K562 (cell line): ENCODE measurements at regions of chr12 and their contacts with region 1.

Region 1: DNA sequence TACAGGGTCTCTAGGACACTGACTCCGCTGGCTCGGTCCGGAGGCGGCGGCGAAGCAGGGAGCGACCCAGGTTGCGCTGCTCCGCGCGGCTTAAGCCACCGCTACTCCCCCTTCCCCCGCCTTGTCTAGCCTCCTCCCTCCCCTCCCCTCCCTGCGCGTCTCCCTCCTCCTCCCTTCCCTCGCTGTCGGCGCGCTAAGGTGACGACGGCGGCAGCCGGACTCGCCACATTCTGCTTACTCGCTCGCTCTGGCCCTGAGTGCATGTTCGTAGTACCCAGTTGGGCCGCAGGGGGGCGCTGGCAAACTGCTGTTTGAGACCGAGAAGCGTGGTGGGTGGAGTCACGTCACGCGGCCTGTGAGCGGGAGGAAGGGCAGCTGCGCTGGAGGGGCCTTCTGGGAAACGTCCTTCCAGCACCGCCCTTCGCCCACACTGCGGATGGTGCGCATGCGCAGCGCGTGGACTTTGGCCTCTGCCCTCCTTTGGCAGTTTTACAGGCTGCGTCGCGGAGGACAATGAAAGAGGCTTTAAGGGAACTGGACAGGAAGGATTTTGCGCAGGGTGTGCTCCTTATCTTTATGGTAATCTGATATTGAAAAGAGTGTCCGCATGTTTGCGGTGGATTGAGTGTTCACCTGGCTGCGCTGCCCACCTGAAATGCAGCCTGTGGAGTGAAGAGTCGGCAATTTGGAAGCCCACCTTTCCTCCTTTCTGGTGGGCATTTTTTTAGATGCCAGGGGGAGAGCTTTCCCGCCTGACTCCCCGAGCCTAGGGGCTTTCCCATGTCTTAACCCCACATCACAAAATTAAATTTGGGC is at the start of gene SCAF11:
- DNase-seq: peak; percentile 96 to 100 (median 96)
- ATAC-seq: peak; percentile 80
- H3K4me3 ChIP-seq: peak within 1 kb of the TSS; percentile 87
- H3K27ac ChIP-seq: peak within 1 kb of the TSS; percentile 97
- H3K4me1 ChIP-seq: peaks cover 8 to 16% of the 10 kb centered on the region in 2 experiments
- H3K27me3 ChIP-seq: no peaks in the 10 kb centered on the region
- CTCF ChIP-seq: peak; percentile 91 to 98 (median 97)
- EP300 ChIP-seq: peak; percentile 62
- POLR2A ChIP-seq: peak; percentile 89
- RAD21 ChIP-seq: peak; percentile 87 to 94
- polyA plus RNA-seq, gene SCAF11: 30.4 to 35.7 TPM

Region 2: GRCh38 chr12:45762185-45763110 is 228.2 kb before region 1 on chr12:
- CTCF ChIA-PET with region 1: no interaction called
- POLR2A ChIA-PET with region 1: no interaction called
- in situ Hi-C with region 1: no loop called
- intact Hi-C with region 1: loop called (anchors 5 kb)
- DNase-seq: peak in 3 of 4 experiments; percentile 9 to 55 (median 27)
- ATAC-seq: peak; percentile 88
- H3K4me3 ChIP-seq: no peak overlapping the region
- H3K27ac ChIP-seq: no peak overlapping the region
- H3K4me1 ChIP-seq: peaks cover 0 to 2% of the 10 kb centered on the region in 2 experiments; a peak in 2 of 5 replicates
- H3K27me3 ChIP-seq: no peaks in the 10 kb centered on the region
- CTCF ChIP-seq: peak; percentile 41 to 67 (median 52); a peak in 5 of 6 replicates
- EP300 ChIP-seq: no peak
- POLR2A ChIP-seq: no peak
- RAD21 ChIP-seq: peak; percentile 37 to 62

Region 3: DNA sequence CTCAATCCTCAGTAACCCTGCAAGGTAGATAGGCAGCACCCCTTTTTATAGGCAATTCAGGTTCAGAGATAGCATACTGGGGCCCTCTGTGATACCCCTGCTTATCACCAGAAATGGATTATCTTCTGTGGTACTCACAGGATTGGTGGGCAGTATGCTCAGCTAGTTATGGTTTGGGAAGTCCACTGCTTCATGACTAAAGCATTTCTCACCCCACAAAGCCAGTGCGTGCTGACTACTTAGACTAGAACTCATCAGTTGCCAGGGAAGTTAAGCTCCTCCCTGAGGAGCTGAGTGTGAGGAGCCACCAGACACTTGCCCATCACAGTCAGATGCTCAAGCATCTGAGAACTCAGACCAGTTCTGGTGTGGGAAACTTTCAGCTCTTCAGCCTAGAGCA is 76.6 kb before region 1 on chr12:
- CTCF ChIA-PET with region 1: no interaction called
- POLR2A ChIA-PET with region 1: no interaction called
- in situ Hi-C with region 1: no loop called
- intact Hi-C with region 1: no loop called
- DNase-seq: peak in 2 of 4 experiments; percentile 9 to 16
- ATAC-seq: peak; percentile 48; the same call in 2 of the 3 replicates
- H3K4me3 ChIP-seq: no peak overlapping the region
- H3K27ac ChIP-seq: no peak overlapping the region
- H3K4me1 ChIP-seq: no peaks in the 10 kb centered on the region
- H3K27me3 ChIP-seq: no peaks in the 10 kb centered on the region
- CTCF ChIP-seq: no peak
- EP300 ChIP-seq: no peak
- POLR2A ChIP-seq: no peak
- RAD21 ChIP-seq: no peak

Region 4: DNA sequence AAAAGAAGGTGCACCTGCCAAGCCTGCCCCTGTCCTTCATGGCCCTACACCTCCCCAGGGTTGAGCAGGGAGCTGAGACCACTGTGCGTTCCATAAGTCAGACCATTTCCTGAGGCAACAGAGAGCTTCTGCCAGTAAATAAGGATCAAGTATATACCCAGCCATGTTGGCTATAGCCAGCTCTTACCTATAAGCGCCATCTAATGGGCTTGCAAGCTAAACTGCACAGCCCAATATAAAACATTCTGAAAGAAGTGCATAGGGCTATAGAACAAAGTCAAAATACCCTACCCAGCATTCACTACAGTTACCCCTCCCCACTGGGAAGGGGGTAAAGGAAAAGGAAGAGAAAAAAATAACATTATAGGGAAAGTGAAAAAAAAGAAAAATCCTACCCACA is 59.0 kb after region 1 on chr12:
- CTCF ChIA-PET with region 1: no interaction called
- POLR2A ChIA-PET with region 1: no interaction called
- in situ Hi-C with region 1: no loop called
- intact Hi-C with region 1: loop called (anchors 2 kb)
- DNase-seq: no peak
- ATAC-seq: peak; percentile 55
- H3K4me3 ChIP-seq: no peak overlapping the region
- H3K27ac ChIP-seq: no peak overlapping the region
- H3K4me1 ChIP-seq: no peaks in the 10 kb centered on the region
- H3K27me3 ChIP-seq: no peaks in the 10 kb centered on the region
- CTCF ChIP-seq: peak in 1 of 3 experiments; percentile 16; a peak in 1 of 6 replicates
- EP300 ChIP-seq: no peak
- POLR2A ChIP-seq: no peak
- RAD21 ChIP-seq: peak in 1 of 2 experiments; percentile 43; a peak in 2 of 4 replicates

Region 5: GRCh38 chr12:46153268-46153872 is 162.7 kb after region 1 on chr12:
- CTCF ChIA-PET with region 1: no interaction called
- POLR2A ChIA-PET with region 1: no interaction called
- in situ Hi-C with region 1: no loop called
- intact Hi-C with region 1: loop called (anchors 2 kb)
- DNase-seq: peak in 2 of 4 experiments; percentile 16 to 17
- ATAC-seq: no peak
- H3K4me3 ChIP-seq: no peak overlapping the region
- H3K27ac ChIP-seq: no peak overlapping the region
- H3K4me1 ChIP-seq: no peaks in the 10 kb centered on the region
- H3K27me3 ChIP-seq: no peaks in the 10 kb centered on the region
- CTCF ChIP-seq: peak; percentile 40 to 82 (median 52); a peak in 4 of 6 replicates
- EP300 ChIP-seq: no peak
- POLR2A ChIP-seq: no peak
- RAD21 ChIP-seq: peak; percentile 48 to 75; a peak in 3 of 4 replicates

Region 6: GRCh38 chr12:46342562-46343033 is 351.9 kb after region 1 on chr12:
- CTCF ChIA-PET with region 1: no interaction called
- POLR2A ChIA-PET with region 1: no interaction called
- in situ Hi-C with region 1: loop called (anchors 10 kb)
- intact Hi-C with region 1: no loop called
- DNase-seq: peak in 1 of 4 experiments; percentile 33
- ATAC-seq: peak; percentile 89
- H3K4me3 ChIP-seq: no peak overlapping the region
- H3K27ac ChIP-seq: no peak overlapping the region
- H3K4me1 ChIP-seq: no peaks in the 10 kb centered on the region
- H3K27me3 ChIP-seq: peaks cover 0 to 3% of the 10 kb centered on the region in 2 experiments; a peak in 1 of 5 replicates
- CTCF ChIP-seq: peak; percentile 52 to 61 (median 52); a peak in 3 of 6 replicates
- EP300 ChIP-seq: no peak
- POLR2A ChIP-seq: no peak
- RAD21 ChIP-seq: peak; percentile 62 to 92

Region 7: GRCh38 chr12:46430340-46430948 is 439.8 kb after region 1 on chr12:
- CTCF ChIA-PET with region 1: no interaction called
- POLR2A ChIA-PET with region 1: no interaction called
- in situ Hi-C with region 1: no loop called
- intact Hi-C with region 1: loop called (anchors 2 kb)
- DNase-seq: peak; percentile 24 to 77 (median 47)
- ATAC-seq: peak; percentile 79
- H3K4me3 ChIP-seq: no peak overlapping the region
- H3K27ac ChIP-seq: peak overlapping the region; percentile 59
- H3K4me1 ChIP-seq: peaks cover 13 to 37% of the 10 kb centered on the region in 2 experiments
- H3K27me3 ChIP-seq: no peaks in the 10 kb centered on the region
- CTCF ChIP-seq: no peak
- EP300 ChIP-seq: peak; percentile 96
- POLR2A ChIP-seq: no peak
- RAD21 ChIP-seq: no peak; a peak in 2 of 4 replicates